Endothelial cell of umbilical vein (primary cell): ENCODE measurements at regions of chr6 and their contacts with region 1.

Region 1: DNA sequence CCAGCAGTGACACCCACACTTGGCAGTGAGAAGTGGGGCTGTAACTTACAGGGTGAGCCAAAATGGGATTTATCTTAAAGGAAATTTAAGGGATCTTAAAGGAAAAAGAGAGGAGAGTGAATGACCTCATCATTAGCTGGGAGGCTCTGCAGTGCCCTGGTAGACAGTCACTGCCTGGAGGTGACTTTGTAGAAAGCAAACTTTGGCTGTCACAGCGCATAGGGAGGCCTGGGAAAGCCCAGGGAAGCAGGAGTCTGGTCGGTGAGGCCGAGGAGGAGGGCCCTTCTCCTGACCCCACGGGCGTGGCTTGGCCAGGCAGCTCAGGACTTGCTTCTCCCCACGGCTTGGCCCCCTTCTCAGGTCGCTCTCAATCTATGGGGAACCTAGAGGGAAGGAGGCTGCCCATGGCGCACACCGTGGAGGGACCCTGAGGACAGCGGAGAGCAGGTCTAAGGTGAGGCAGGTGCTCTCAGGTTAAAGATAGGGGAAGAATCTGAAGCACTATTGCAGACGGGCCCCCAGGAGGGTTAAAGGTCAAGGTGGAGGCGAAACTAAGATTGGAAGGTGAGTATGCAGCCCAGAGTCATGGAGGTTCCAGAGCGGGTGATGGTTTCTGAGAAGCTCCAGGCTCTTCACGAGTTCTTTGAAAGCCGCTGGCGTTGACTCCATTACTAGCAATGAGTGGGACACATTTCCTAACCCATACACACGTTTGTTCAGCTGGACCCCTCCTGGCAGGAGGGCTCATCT is 15.6 kb upstream of the RIPK1 start:
- DNase-seq: no peak
- H3K4me3 ChIP-seq: no peak overlapping the region
- H3K27ac ChIP-seq: no peak overlapping the region
- H3K4me1 ChIP-seq: peaks cover 9% of the 10 kb centered on the region
- H3K27me3 ChIP-seq: peaks cover 3 to 8% of the 10 kb centered on the region in 2 experiments
- CTCF ChIP-seq: no peak
- POLR2A ChIP-seq: no peak

Region 2: DNA sequence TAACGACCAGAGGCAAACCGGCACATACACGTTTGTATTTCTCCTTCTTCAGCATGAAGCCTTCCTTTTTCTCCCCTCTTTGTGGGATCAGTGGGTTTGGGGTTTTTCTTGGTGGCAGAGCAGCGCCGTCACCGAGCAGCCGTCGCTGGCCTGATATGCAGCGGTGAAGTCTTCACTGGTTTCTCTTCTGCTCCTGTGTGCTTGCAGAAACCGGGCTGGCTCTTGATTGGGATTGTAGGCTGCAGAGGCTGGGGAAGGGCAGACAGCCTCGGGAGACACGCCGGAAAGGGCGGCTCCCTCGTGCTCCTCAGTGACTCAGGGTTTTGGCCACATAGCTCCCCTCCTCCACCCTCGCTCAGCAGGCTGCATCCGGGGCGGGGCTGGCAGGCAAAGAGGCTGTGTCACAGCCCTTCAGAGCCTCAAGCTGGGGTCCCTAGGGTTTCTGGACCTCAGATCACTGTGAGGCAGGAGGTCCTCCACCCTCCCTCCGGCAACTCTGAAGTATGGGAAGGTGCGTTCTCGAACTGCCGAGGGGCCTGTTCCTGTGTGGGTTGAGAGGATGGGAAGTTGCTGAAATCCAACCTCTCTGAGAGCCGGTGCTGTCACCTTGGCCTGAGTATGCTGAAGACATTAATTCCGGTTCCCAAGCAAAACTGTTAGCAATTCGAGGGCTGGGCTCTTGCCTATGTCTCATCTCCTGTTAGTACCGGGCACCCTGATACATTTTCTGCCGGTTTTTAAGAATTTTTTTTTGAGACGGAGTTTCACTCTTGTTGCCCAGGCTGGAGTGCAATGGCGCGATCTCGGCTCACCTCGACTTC is 28.8 kb before region 1 on chr6:
- CTCF ChIA-PET with region 1: no interaction called
- POLR2A ChIA-PET with region 1: no interaction called
- dilution Hi-C with region 1: no loop called
- intact Hi-C with region 1: loop called (anchors 1 kb)
- DNase-seq: peak; percentile 65
- H3K4me3 ChIP-seq: peak overlapping the region in 1 of 3 experiments; percentile 33
- H3K27ac ChIP-seq: peak overlapping the region; percentile 78
- H3K4me1 ChIP-seq: peaks cover 19% of the 10 kb centered on the region
- H3K27me3 ChIP-seq: no peaks in the 10 kb centered on the region
- CTCF ChIP-seq: no peak
- POLR2A ChIP-seq: no peak